Thyroid gland (tissue), 4 donors: ENCODE measurements at regions of chr10 and their contacts with region 1.

Region 1: DNA sequence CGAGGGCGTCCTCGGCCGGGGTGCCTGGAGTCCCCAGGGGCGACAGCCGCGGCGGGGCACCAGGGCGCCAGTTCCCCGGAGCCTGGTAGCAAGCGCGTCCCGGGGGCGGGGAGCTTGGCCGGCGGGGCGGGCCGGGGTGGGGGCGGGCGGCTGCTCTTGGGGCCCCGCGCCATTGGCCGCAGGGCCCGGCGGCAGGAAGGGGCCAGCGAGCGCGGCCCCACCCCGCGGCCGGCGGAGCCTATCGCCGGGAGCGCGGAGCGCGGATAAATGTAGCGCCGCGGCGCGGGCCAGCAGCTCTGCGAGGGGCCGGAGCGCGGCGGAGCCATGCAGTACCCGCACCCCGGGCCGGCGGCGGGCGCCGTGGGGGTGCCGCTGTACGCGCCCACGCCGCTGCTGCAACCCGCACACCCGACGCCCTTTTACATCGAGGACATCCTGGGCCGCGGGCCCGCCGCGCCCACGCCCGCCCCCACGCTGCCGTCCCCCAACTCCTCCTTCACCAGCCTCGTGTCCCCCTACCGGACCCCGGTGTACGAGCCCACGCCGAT is at the start of gene HHEX:
- DNase-seq: peak; percentile 88 to 89
- H3K4me3 ChIP-seq: peak within 1 kb of the TSS; percentile 94 to 99 (median 94)
- H3K27ac ChIP-seq: peak within 1 kb of the TSS; percentile 99 to 100 (median 99)
- H3K4me1 ChIP-seq: peaks cover 0 to 12% of the 10 kb centered on the region in 2 donors
- H3K27me3 ChIP-seq: no peaks in the 10 kb centered on the region
- CTCF ChIP-seq: peak in 1 of 6 experiments; percentile 25
- POLR2A ChIP-seq: peak; percentile 86 to 99
- total RNA-seq, gene HHEX: 90.9 to 154 (median 122) TPM

Region 2: GRCh38 chr10:92592761-92593618 is 96.7 kb before region 1 on chr10 and contains the start of gene KIF11:
- intact Hi-C with region 1: loop called (anchors 10 kb)
- DNase-seq: peak; percentile 99
- H3K4me3 ChIP-seq: peak within 1 kb of the TSS; percentile 30 to 47 (median 37)
- H3K27ac ChIP-seq: peak within 1 kb of the TSS; percentile 89 to 93 (median 90)
- H3K4me1 ChIP-seq: peaks cover 9 to 22% of the 10 kb centered on the region in 2 donors
- H3K27me3 ChIP-seq: no peaks in the 10 kb centered on the region
- CTCF ChIP-seq: no peak
- POLR2A ChIP-seq: peak in 1 of 2 donors; percentile 96
- total RNA-seq, gene KIF11: 0.67 to 1.5 (median 1.1) TPM